Heart left ventricle (tissue), 16 donors: ENCODE measurements at regions of chr10 and their contacts with region 1.

Region 1: GRCh38 chr10:75294866-75295701 is 59.3 kb upstream of the COMTD1 start:
- DNase-seq: peak; percentile 77 to 88 (median 85)
- ATAC-seq: peak; percentile 50 to 89 (median 82)
- H3K4me3 ChIP-seq: peak overlapping the region; percentile 16 to 73 (median 64)
- H3K27ac ChIP-seq: peak overlapping the region; percentile 76 to 96 (median 90)
- H3K4me1 ChIP-seq: peaks cover 0 to 28% (median 19%) of the 10 kb centered on the region in 12 donors
- H3K27me3 ChIP-seq: peaks cover 0 to 5% (median 0%) of the 10 kb centered on the region in 9 donors
- CTCF ChIP-seq: peak in 10 of 12 donors; percentile 15 to 54 (median 38)
- POLR2A ChIP-seq: peak in 1 of 2 donors; percentile 63

Region 2: GRCh38 chr10:74924251-74924951 is 370.7 kb before region 1 on chr10:
- intact Hi-C with region 1: no loop called
- DNase-seq: no peak
- ATAC-seq: peak; percentile 32 to 84 (median 52)
- H3K4me3 ChIP-seq: no peak overlapping the region
- H3K27ac ChIP-seq: peak overlapping the region; percentile 13 to 83 (median 42)
- H3K4me1 ChIP-seq: peaks cover 3 to 84% (median 61%) of the 10 kb centered on the region in 12 donors
- H3K27me3 ChIP-seq: no peaks in the 10 kb centered on the region
- CTCF ChIP-seq: no peak
- POLR2A ChIP-seq: peak in 1 of 2 donors; percentile 3

Region 3: GRCh38 chr10:75395066-75395931 is 100.2 kb after region 1 on chr10:
- intact Hi-C with region 1: loop called in 8 of 10 experiments (anchors 5 to 10 kb)
- DNase-seq: peak; percentile 40 to 82 (median 56)
- ATAC-seq: peak in 3 of 4 donors; percentile 38 to 49 (median 40)
- H3K4me3 ChIP-seq: peak overlapping the region; percentile 21 to 96 (median 60)
- H3K27ac ChIP-seq: peak overlapping the region in 11 of 12 donors; percentile 2 to 100 (median 81)
- H3K4me1 ChIP-seq: peaks cover 0 to 42% (median 13%) of the 10 kb centered on the region in 12 donors
- H3K27me3 ChIP-seq: peaks cover 0 to 23% (median 0%) of the 10 kb centered on the region in 9 donors
- CTCF ChIP-seq: peak; percentile 84 to 98 (median 92)
- POLR2A ChIP-seq: no peak